ENCODE measurements at regions of chr6 and their contacts with region 1.

Region 1: DNA sequence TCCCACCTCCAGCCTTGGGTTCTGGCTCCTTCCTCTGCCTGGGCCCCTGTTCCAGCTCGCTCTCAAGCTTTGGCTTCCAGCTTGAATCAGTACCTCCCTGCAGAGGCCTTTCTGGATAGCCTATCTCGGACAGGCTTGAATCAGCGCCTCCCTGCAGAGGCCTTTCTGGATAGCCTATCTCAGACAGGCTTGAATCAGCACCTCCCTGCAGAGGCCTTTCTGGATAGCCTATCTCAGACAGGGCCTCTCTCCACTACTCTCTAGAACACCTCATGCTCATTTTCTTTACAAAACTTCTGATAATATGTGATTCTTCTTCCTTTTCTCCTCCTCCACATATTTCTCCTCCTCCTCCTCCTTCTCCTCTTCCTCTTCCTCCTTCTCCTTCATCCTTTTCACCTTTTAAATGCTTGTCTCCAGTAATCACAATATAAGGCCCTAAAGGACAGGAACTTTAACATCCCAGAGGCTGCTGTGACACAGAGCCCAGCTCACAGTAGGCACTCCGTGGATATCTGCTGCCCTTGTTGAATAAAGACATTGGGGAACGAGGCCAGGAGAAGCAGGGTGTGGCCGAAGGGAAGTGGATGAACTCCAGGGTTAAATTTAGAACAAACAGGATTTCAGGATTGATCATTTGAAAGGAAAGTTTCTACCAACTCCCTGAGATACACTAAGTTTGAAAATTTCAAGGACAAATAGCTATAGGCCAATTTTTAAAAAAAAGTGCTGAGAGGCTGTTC is 9.3 kb upstream of the RPS6KA2 start:
- DNase-seq: no peak

Region 2: DNA sequence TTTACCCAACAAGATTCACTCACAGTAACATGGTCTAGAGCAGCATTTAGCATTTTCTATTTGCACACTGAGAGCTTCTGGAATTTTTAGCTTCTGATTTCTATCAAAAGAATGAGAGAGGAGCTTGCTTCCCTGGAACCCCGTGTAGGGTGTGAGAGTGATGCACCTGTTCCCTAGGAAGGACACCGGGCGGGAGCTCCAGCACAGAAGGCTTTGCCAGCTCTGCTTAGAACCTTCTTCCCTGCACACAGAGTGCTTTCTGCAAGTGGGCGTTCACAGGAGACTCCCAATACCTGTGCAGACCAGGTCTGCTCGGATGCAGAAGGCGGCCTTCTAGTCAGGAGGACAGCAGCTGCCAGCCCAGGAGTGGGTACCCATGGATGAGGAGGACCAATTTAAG is 686.0 kb before region 1 on chr6:
- intact Hi-C with region 1: no loop called
- DNase-seq: no peak

Region 3: DNA sequence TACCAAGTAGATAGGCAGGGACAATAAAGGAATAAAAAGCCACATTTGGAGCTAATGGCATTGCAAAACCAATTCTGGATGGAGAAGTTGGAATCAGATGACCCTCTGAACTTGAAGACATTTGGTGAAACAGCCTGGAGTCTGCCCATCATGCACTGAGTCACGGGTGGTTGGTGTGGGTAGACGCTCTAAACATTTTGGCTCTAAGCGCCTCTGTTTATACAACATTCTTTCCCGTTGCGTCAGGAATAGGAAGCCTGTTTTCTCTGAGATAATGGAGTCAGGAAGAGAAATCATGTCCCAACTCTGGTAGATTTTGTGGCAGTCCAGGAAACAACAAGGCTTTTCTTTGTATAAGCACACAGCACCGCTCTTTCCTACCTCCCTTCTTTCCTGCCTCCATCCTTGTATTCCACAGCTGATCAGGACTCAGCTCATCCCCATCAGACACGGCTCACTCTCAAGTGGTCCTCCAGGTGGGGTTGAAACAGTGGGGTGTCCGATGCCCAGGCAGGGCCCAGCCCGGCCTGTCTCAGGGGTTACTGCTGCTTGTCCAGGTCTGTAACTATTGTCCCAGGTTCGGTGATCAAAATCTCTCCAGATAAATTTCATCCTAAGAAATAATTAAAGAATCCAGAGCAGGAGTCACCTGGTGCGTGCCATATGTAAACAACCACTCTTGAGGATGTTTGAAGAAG is 37.8 kb before region 1 on chr6:
- intact Hi-C with region 1: no loop called
- DNase-seq: no peak

Region 4: GRCh38 chr6:166691199-166691598 is 54.8 kb after region 1 on chr6:
- intact Hi-C with region 1: loop called (anchors 5 kb)
- DNase-seq: no peak

Region 5: GRCh38 chr6:166862287-166862977 is 226.1 kb after region 1 on chr6:
- intact Hi-C with region 1: no loop called
- DNase-seq: no peak